Panc1 (cell line): ENCODE measurements at regions of chr10 and their contacts with region 1.

Region 1: DNA sequence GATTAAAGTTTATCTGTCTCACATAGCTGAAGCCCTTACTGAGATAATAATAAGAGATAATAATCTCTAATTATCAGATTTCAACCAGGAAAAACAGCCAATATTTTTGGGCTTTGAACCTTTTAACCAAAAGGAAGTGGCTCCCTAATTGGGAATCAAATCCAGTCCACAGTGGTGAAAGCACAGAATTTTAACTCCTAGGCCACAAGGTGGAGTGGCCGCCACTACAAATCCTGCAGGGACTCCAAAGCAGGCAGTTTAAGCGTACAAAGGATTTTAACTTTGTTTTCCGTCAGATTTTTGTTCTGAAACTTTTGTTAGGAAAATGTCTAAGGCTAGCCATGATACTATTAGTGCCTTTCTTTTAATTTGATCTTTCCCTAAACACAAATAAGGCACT is 99.6 kb upstream of the CCNY start:
- DNase-seq: no peak
- ATAC-seq: peak; percentile 86
- H3K4me3 ChIP-seq: no peak overlapping the region
- H3K27ac ChIP-seq: no peak overlapping the region
- H3K4me1 ChIP-seq: no peaks in the 10 kb centered on the region
- H3K27me3 ChIP-seq: no peaks in the 10 kb centered on the region
- CTCF ChIP-seq: peak; percentile 74

Region 2: GRCh38 chr10:35396560-35397434 is 160.1 kb after region 1 on chr10:
- CTCF ChIA-PET with region 1: interaction called, 10 read pairs
- POLR2A ChIA-PET with region 1: no interaction called
- in situ Hi-C with region 1: no loop called
- intact Hi-C with region 1: no loop called
- DNase-seq: no peak
- ATAC-seq: no peak
- H3K4me3 ChIP-seq: no peak overlapping the region
- H3K27ac ChIP-seq: no peak overlapping the region
- H3K4me1 ChIP-seq: no peaks in the 10 kb centered on the region
- H3K27me3 ChIP-seq: no peaks in the 10 kb centered on the region
- CTCF ChIP-seq: no peak

Region 3: DNA sequence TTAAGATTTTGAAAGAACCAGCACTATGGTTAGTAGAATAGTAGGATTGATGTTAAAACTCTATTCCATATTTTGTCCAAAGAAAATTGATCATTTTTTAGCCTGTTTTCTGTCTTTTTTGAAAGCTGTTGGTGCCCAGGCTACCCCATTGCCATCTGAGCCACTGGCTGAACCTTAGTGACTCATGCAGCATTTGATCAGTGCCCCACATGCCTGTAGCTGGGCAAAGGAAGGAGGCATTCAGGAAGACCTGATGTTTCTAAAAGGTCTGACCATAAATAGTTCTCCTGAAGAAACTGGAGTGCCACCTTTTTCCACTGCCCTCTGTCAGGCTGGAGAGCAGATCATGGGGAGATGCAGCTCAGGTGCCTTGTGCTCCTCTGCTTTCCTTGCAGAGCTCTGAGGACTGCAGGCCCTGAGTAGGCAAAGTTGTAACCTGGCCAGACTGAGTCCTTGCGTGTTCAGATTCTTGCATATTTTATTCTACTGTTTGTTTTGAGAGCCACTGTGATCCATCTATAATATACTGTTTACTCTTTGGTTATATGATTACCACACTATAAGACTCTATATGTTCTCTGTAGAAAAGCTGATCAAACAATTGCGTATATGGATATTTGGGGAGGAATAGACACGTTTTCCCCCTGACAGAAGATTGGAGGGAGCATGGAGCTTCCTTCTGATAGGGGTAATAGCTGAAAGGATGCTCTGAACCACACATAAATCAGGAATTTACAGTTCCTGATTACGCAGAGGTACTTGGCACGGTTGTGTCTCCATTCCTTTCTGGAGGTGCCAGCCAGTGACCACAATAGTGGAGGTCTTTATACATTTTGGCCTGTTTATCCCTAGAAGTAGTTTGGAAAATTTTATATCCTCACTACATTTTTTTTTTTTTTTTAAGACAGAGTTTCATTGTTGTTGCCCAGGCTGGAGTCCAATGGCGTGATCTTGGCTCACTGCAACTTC is 319.5 kb after region 1 on chr10:
- CTCF ChIA-PET with region 1: interaction called, 10 read pairs
- POLR2A ChIA-PET with region 1: no interaction called
- in situ Hi-C with region 1: no loop called
- intact Hi-C with region 1: no loop called
- DNase-seq: no peak
- ATAC-seq: no peak
- H3K4me3 ChIP-seq: no peak overlapping the region
- H3K27ac ChIP-seq: no peak overlapping the region
- H3K4me1 ChIP-seq: no peaks in the 10 kb centered on the region
- H3K27me3 ChIP-seq: no peaks in the 10 kb centered on the region
- CTCF ChIP-seq: no peak